Activated CD4-positive, alpha-beta memory T cell treated with anti-CD3 and anti-CD28 coated beads, Interleukin-2, amount 10 ng/mL, durations not matched to agents 7 days and 5 days (primary cell): ENCODE measurements at regions of chr9 and their contacts with region 1.

Region 1: GRCh38 chr9:114405294-114406034 is 17.7 kb upstream of the AKNA start:
- DNase-seq: peak; percentile 84
- H3K4me3 Mint-ChIP-seq: no peak overlapping the region
- H3K27ac Mint-ChIP-seq: no peak overlapping the region
- H3K4me1 Mint-ChIP-seq: peaks cover 16% of the 10 kb centered on the region
- H3K27me3 Mint-ChIP-seq: no peaks in the 10 kb centered on the region

Region 2: DNA sequence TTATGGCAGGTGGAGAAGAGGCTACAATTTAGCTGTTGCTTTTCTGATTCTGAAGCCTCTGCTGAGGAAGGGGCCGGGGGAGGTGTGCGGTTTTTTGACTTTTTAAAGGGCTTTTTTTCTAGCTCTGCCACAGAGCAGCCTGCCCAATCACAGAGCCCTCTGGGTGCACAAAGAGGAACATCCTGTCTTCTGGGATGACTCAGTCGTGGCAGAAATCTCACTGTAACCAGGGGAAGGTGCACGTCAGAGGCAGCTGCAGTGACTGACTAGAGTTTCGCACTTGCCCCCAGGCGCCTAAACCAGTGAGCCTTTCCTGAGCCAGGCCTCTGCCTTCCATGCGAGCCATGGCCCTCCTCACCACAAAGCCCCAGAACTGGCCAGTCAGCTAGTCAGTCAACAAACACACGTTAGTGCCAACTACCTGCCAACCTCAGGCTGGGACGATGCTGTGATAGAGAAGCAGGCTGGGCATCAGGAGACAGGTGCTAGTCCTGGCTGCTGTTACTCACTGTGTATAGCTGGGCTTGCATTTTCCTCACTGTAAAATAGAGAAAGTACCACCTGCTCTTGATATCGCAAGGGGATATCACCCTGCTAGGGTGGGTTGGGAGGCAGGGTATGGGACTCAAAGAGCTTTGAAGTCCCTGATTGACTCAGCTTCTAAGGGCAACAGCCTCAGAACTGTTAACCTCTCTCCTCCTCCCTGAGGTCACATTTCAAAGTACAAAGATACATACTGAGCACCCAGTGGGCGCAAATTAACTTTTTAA is 19.9 kb before region 1 on chr9:
- CTCF ChIA-PET with region 1: interaction called, 12 read pairs
- POLR2A ChIA-PET with region 1: interaction called, 135 read pairs
- DNase-seq: peak; percentile 93
- H3K4me3 Mint-ChIP-seq: peak overlapping the region; percentile 100
- H3K27ac Mint-ChIP-seq: peak overlapping the region; percentile 98
- H3K4me1 Mint-ChIP-seq: peaks cover 58% of the 10 kb centered on the region
- H3K27me3 Mint-ChIP-seq: no peaks in the 10 kb centered on the region

Region 3: GRCh38 chr9:114434878-114435311 is 29.4 kb after region 1 on chr9:
- CTCF ChIA-PET with region 1: interaction called, 15 read pairs
- POLR2A ChIA-PET with region 1: no interaction called
- DNase-seq: no peak
- H3K4me3 Mint-ChIP-seq: no peak overlapping the region
- H3K27ac Mint-ChIP-seq: no peak overlapping the region
- H3K4me1 Mint-ChIP-seq: peaks cover 8% of the 10 kb centered on the region
- H3K27me3 Mint-ChIP-seq: no peaks in the 10 kb centered on the region

Region 4: GRCh38 chr9:114505187-114506081 is 100.0 kb after region 1 on chr9 and contains the start of gene WHRN:
- CTCF ChIA-PET with region 1: interaction called, 86 read pairs
- POLR2A ChIA-PET with region 1: no interaction called
- DNase-seq: peak; percentile 89
- H3K4me3 Mint-ChIP-seq: peak within 1 kb of the TSS; percentile 73
- H3K27ac Mint-ChIP-seq: no peak within 1 kb of the TSS
- H3K4me1 Mint-ChIP-seq: peaks cover 31% of the 10 kb centered on the region
- H3K27me3 Mint-ChIP-seq: peaks cover 60% of the 10 kb centered on the region
- total RNA-seq, gene WHRN: 4.5 to 4.8 TPM

Region 5: DNA sequence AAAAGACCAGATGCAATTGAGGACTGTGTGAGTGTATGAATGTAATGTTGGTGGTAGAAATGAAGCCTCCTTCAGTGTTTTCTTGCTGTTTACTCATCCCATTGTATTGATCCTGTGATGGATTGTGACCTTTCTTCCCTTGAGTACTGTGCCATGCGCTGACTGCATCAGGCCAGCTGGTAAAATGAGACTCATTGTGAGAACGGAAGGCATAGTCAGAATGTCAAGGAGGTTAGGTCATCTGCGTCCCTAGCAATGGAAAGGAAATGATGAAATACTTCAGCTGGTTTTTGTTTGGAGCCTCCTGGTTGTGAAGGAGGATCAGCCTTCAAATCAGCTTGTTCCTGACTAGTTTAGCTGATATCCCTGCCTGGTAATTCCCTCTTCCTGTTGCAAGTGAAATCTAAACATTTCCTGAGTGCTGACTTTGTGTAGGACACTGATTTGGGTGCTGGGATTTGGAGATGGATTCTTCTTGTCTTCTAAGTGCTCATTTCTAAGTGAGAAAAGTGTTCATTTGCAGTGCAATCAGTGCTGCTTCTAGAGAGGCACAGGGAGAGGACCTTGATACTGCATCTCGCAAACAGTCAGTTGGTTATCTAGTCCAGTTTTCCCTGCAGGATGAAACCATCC is 489.5 kb after region 1 on chr9:
- CTCF ChIA-PET with region 1: no interaction called
- POLR2A ChIA-PET with region 1: no interaction called
- DNase-seq: peak; percentile 66
- H3K4me3 Mint-ChIP-seq: no peak overlapping the region
- H3K27ac Mint-ChIP-seq: peak overlapping the region; percentile 74
- H3K4me1 Mint-ChIP-seq: peaks cover 43% of the 10 kb centered on the region
- H3K27me3 Mint-ChIP-seq: no peaks in the 10 kb centered on the region